Breast epithelium (tissue), 4 donors: ENCODE measurements at regions of chr10 and their contacts with region 1.

Region 1: GRCh38 chr10:70982443-70982842 is 94.1 kb upstream of the PCBD1 start:
- DNase-seq: no peak
- H3K4me3 ChIP-seq: no peak overlapping the region
- H3K27ac ChIP-seq: no peak overlapping the region
- H3K4me1 ChIP-seq: no peaks in the 10 kb centered on the region
- H3K27me3 ChIP-seq: no peaks in the 10 kb centered on the region
- CTCF ChIP-seq: no peak
- POLR2A ChIP-seq: no peak

Region 2: DNA sequence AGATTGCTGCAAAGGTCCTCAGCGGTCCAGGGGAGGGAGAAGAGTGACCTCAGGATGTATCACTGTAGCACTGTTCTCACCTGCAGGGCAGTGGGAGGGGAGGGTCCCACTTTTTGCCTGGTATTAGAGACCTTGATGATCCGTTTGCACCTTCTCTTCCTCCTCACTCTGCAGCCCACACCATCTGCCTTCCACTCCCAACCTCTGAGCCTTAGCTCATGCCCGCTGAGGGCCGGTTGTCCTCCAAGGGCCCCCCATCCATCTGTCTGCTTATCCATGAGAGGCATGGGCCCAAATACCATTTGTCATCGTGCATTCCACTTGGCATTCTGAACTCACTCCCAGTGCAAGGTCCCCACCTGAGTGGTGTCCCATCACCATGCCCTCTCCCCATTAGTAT is 29.5 kb before region 1 on chr10:
- intact Hi-C with region 1: loop called (anchors 1 kb)
- DNase-seq: no peak
- H3K4me3 ChIP-seq: no peak overlapping the region
- H3K27ac ChIP-seq: no peak overlapping the region
- H3K4me1 ChIP-seq: no peaks in the 10 kb centered on the region
- H3K27me3 ChIP-seq: no peaks in the 10 kb centered on the region
- CTCF ChIP-seq: no peak
- POLR2A ChIP-seq: no peak